ENCODE measurements at regions of chr1 and their contacts with region 1.

Region 1: GRCh38 chr1:89873770-89874169 is 52.9 kb downstream of the LRRC8D start:
- DNase-seq: no peak
- ATAC-seq: peak; percentile 33 to 80 (median 60)
- H3K4me3 ChIP-seq: no peak overlapping the region
- H3K27ac ChIP-seq: peak overlapping the region in 3 of 12 donors; percentile 11 to 36 (median 15)
- H3K4me1 ChIP-seq: peaks cover 0 to 59% (median 22%) of the 10 kb centered on the region in 12 donors
- H3K27me3 ChIP-seq: no peaks in the 10 kb centered on the region
- CTCF ChIP-seq: no peak
- POLR2A ChIP-seq: no peak

Region 2: DNA sequence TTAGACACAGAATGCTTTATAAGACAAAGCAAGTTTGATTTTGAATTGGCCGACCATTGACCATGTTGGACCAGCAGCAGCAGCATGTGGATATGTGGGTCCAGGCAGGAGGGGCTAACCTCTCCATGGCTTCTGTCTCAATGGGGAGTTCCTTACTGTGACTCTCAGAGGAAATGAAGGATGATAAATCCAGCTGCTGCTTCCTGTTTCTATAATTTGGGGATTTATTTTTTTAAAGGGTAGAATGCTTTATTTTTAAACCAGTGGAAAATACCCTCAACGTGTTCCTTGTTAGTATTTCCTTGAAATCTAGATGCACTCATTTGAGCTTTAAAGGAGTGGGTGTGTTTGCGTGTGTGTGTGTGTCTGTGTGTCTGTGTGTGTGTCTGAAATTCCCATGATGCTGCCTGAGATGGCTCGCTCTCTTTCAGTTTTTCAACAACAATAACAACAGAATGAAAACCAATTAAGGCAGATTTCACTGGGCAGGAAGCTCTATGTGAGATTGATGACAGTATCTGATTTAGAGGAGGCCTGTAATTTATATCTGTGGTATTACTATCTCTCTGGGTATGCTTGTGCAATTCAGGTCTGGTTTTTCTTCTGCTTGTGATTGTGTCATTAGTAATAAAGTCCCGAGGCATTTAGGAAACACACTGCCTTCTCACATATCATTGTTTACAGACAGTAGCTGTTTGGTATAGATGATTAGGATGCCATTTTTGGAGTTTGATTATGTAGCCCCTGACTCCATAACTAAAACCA is 35.1 kb after region 1 on chr1:
- intact Hi-C with region 1: loop called in 1 of 10 experiments (anchors 5 kb)
- DNase-seq: peak in 3 of 5 donors; percentile 36 to 49 (median 48)
- ATAC-seq: peak; percentile 25 to 71 (median 36)
- H3K4me3 ChIP-seq: no peak overlapping the region
- H3K27ac ChIP-seq: peak overlapping the region in 11 of 12 donors; percentile 19 to 77 (median 54)
- H3K4me1 ChIP-seq: peaks cover 6 to 70% (median 41%) of the 10 kb centered on the region in 12 donors
- H3K27me3 ChIP-seq: no peaks in the 10 kb centered on the region
- CTCF ChIP-seq: no peak
- POLR2A ChIP-seq: no peak